ENCODE measurements at regions of chr3 and their contacts with region 1.

Region 1: DNA sequence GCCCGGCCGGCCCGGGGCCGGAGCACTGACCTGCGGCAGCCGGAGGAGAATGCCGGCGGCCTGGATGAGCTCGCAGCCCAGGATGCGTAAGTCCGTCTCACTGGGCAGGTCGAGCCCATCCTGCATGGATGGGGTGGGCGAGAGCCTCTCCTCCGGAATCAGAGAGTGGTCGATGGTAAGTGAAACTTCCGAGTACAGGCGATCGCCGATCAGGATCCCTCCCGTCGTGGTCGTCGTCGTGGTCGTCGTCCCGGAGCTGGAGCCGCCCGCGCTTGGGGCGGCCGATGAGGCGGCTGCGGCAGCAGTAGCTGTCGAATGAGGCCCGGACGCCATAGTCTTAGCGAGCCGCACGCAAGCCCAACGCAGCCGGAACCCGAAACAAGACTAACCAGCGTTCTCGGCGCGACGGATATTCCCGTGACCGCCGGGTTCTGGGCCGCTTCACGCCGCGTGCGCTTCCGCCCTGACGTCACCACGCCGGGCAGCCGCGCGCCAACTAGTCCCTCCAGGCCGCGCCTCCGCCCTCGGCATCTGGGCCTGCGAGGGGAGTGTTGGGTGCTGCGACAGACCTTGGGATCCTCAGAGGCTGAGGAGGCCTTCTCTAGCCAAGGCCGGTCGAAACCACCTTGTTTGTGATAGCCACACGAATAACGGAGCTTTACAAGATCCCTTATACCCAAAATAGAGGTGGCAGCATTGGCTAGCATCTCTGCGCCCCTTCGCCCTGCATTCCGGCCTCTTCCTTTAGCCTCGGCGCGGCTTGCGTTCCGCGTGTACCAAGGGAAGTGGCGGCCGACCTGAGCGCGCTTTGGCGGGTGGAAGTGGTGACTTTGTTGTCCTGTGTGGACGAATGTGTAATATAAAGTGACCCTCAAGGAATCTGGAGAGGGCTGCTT is at the start of gene CCNL1:
- DNase-seq: peak; percentile 99
- H3K4me3 Mint-ChIP-seq: peak within 1 kb of the TSS; percentile 94
- H3K27ac Mint-ChIP-seq: peak within 1 kb of the TSS; percentile 99
- H3K4me1 Mint-ChIP-seq: peaks cover 44% of the 10 kb centered on the region
- H3K27me3 Mint-ChIP-seq: no peaks in the 10 kb centered on the region
- total RNA-seq, gene CCNL1: 171 and 172 TPM in 2 replicates

Region 2: DNA sequence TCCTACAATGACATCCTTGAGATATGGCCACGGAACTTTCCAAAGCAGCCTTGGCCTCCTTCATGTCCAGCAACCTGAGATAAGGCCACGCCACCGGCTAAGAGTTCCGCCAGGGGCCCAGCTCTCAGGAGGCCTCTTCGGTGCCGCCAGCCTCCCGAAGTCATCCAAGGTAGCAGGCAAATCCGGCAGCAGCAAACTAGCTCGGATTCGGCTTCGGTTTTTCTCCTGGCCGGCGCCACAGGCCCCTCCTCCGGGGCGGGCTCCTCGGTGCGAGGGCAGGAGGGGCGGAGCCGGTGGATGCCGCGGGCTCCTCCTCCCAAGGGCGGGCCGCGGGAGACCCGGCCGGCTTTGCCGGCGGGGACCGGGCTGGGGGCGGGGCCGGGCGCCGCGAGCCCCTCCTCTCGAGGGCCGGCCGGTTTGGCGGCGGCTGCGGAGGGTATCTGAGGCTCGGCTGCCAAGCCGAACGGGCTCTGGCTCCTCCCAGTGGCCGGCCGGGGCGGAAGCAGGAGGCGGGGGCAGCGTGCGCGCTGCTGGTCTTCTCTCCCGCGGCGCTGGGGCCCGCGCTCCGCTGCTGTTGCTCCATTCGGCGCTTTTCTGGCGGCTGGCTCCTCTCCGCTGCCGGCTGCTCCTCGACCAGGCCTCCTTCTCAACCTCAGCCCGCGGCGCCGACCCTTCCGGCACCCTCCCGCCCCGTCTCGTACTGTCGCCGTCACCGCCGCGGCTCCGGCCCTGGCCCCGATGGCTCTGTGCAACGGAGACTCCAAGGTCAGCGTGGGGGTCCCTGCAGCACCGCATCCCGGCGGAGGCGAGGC is 1289.7 kb before region 1 on chr3 and contains the start of gene GMPS:
- intact Hi-C with region 1: loop called (anchors 1 kb)
- DNase-seq: no peak
- H3K4me3 Mint-ChIP-seq: peak within 1 kb of the TSS; percentile 88
- H3K27ac Mint-ChIP-seq: peak within 1 kb of the TSS; percentile 96
- H3K4me1 Mint-ChIP-seq: peaks cover 19% of the 10 kb centered on the region
- H3K27me3 Mint-ChIP-seq: no peaks in the 10 kb centered on the region
- total RNA-seq, gene GMPS: 150 and 151 TPM in 2 replicates

Region 3: DNA sequence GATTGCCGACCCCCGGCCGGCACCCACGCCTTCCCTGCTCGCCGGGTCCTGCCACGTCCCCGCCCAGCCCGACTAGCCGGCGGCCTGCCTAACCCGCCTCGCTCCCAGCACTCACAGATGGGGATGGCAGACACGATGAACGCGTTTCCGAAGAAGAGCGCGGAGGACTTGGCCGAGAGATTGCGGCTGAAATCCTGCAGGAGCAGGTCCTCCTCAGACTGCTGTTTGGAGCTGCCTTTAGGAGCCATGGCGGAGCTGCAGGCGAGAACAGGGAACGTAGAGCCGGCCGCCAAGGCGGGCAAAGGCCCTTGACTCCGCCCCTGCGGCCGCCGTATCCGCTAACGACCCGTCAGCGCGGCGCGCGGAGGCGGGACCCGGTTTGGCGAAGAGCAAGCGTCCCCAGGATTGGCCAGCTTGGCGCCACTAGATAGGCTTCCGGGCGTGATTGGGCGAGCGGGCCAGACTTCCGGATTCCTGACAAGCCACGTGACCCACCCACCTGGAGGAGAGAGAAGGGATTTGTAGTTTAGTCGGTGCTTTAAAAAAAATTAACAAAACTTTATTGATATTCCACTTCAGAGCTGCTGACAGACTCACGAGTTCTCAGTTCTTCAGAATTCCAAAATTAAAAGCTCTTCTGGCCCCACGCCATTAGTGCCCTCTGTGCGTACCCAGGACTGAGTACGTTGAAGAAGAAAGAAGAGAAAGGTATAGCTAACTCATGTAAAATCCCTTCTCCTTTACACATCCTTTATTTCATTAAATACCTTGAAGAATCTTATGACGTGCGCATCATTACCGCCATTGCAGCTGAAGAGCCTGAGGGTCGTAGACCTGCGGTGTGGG is 604.9 kb before region 1 on chr3 and contains the start of gene SSR3:
- intact Hi-C with region 1: loop called (anchors 1 kb)
- DNase-seq: peak; percentile 100
- H3K4me3 Mint-ChIP-seq: peak within 1 kb of the TSS; percentile 97
- H3K27ac Mint-ChIP-seq: peak within 1 kb of the TSS; percentile 96
- H3K4me1 Mint-ChIP-seq: peaks cover 48% of the 10 kb centered on the region
- H3K27me3 Mint-ChIP-seq: no peaks in the 10 kb centered on the region
- total RNA-seq, gene SSR3: 151 and 153 TPM in 2 replicates

Region 4: GRCh38 chr3:157088601-157089454 is 71.2 kb before region 1 on chr3:
- intact Hi-C with region 1: loop called (anchors 1 kb)
- DNase-seq: peak; percentile 98
- H3K4me3 Mint-ChIP-seq: peak overlapping the region; percentile 75
- H3K27ac Mint-ChIP-seq: peak overlapping the region; percentile 93
- H3K4me1 Mint-ChIP-seq: peaks cover 71% of the 10 kb centered on the region
- H3K27me3 Mint-ChIP-seq: no peaks in the 10 kb centered on the region

Region 5: DNA sequence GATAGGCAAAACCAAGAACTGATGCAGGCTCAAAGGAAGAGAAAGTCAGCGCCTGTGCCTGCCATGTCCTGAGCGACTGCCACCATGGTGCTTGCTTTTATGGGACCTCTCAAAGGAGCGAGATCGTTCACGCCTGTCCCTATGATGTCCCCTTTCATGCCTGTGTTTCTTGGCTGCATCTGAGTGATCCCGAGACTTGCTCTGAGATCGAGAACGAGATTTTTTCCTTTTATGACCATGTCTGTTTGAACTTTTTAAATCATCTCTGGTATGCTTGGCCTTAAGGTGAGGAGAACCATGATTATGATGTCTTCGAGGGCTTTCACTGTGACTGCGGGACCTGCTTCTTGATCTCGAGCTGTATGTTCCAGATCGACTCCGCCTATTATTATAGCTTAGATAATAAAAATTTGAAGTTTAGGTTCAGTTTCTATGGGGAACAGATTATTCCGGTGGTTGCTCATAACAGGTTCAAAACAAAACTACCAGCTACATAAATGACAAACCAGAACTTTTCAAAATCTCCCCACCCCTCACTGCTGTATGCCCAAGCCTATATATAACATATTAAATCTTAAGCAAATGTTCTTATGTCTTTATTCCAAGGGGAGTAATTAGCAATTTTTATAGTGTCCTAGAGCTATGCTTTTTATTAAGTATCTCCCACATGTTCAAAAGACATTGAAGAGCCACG is 11.7 kb before region 1 on chr3:
- intact Hi-C with region 1: loop called (anchors 1 kb)
- DNase-seq: no peak
- H3K4me3 Mint-ChIP-seq: no peak overlapping the region
- H3K27ac Mint-ChIP-seq: peak overlapping the region; percentile 7
- H3K4me1 Mint-ChIP-seq: peaks cover 33% of the 10 kb centered on the region
- H3K27me3 Mint-ChIP-seq: no peaks in the 10 kb centered on the region

Region 6: DNA sequence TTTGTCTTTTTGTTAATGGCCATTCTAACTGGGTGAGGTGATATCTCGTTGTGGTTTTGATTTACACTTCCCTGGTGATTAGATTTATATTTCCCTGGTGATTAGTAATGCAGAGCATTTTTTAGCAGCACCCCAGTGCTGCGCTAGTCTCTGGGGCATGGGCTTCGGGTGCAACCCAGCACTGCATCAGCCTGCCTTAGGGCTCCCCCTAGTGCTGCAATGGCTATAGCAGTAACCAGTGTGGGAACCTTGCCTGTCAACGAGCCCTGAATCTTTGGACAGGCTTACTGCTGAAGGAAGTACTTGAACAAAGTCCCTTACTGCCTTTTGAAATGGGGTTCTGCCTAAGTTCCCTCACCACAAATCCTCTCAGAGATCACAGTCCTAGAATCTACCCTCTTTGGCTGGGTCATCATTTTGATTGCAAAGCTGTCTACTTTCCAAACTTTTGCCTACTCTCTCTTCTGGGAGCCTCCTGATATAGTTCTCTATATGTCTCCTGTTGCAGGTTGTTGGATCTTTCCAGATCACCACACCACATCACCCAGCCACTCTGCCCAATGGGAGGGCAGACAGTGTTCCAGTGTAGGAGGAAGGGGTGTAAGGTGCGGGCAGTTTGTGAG is 79.2 kb after region 1 on chr3:
- intact Hi-C with region 1: loop called (anchors 1 kb)
- DNase-seq: peak; percentile 93
- H3K4me3 Mint-ChIP-seq: no peak overlapping the region
- H3K27ac Mint-ChIP-seq: no peak overlapping the region
- H3K4me1 Mint-ChIP-seq: peaks cover 3% of the 10 kb centered on the region
- H3K27me3 Mint-ChIP-seq: peaks cover 2% of the 10 kb centered on the region